ENCODE measurements at regions of chr11 and their contacts with region 1.

Region 1: DNA sequence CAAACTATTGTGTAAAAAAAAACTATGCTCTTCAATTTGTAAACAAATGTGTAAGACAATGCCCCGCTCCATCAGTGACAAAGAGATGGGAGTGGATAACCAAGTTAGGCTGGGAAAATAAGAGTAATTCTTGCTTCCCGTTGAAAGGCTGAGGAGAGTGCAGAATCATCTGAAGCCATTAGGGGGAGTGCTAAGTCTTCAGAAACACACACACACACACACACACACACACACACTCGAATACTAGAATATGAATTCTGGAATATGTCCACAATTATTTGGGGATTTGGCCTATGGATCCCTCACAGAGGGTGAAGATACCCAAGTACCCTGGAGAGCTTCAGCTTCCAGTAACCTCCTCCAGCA is 27.8 kb upstream of the ROBO3 start:
- DNase-seq: no peak
- ATAC-seq: peak; percentile 63

Region 2: DNA sequence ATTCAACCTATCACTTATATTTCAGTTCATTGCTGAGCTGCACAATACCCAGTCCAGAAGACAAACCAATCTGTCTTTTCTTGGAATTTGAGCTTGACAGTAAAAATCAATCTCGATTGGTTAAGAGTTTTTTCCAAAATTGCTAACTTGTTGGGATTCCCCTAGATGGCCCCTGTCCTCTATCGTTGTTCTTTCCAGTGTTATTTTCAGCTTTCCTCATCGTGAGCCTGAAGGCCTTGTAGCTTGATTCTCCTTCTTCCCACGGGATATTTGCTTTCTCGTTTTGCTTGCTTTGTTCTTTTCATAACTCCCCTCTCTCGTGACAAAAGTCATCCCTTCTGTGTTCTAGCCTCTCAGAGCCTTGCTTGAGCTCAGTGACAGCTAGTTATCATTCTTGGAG is 395.0 kb before region 1 on chr11:
- intact Hi-C with region 1: no loop called
- DNase-seq: no peak
- ATAC-seq: no peak

Region 3: DNA sequence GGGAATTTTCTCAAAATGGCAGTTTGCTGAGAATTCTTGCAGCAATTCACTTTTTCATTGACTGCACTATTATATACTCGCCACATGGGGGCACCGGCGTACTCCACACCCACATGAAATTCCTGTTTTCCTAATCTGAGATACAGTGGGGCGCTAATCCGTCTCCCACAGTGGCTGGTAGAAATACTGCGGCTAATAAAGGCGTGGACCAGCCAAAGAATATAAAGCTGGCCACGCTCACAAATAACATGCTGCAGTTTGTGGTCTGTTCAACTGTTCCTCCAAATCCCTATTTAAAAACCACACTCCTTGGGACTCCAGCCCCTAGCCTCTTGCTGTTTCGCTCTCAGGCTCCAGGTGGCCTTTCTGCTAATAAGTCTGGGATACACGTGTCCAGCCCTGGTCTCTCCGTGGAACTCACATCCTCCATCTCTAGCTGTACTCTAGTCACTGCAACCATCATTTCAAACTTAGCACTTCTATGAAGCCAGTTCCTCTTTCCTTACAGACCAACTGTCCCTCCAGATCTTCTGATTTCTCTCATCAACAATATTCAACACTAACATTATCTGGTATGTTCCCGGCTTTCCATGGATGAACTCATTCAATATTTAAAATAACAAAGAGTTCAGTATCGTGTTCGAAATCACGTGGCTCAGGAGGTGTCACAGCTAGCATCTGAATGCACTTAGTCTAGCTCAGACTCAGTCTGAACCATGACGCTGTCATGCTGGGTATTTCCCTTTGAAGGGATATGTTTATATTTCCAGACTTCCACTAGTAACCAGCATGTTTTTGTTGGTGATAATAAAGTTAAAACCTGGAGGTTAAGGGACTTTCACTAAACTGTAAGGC is 192.8 kb before region 1 on chr11:
- intact Hi-C with region 1: loop called (anchors 5 kb)
- DNase-seq: peak; percentile 46
- ATAC-seq: peak; percentile 90

Region 4: DNA sequence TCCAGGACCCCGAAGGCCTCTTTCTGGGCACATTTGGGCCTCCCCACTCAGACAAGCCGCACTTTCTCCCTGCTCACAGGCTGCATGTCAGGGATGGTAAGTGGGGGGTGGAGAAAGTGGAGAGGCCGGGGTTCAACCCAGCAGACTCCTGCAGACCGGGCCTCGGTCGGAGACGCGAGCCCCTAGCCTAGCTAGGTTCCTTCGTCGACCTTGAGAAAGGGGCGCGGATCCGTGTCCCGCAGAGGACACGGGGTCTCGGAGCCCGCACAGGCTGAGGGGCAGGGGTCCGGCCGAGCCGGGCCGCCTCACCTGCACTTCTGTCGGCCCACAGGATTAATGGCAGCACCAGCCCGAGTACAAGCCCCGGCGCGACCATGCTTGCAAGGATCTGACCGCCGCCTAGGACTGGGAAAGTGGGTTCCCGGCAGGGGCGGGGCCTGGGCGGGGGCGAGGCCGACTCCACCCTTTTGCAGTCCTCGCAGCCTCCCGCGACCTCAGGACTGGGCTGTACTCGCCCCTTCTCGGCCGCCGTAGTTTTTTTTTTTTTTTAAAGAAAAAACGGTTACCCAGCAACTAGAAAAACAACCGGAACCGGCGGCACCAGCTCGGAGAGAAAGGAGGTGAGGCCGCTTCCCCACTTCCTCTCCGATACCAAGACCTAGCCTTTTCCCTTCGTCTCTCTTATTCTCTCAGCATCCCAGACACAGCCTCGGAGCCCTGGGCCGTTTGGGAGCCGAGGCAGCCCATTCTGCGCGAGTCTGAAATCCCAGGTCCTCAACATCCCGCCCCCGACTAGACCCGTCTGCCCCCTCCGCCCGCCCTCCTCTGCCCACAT is 163.9 kb before region 1 on chr11 and contains the starts of genes SIAE and SPA17:
- intact Hi-C with region 1: loop called (anchors 2 kb)
- DNase-seq: peak; percentile 96
- ATAC-seq: peak; percentile 100
- total RNA-seq, gene SIAE: 83.4 TPM
- total RNA-seq, gene SPA17: 2.7 TPM

Region 5: GRCh38 chr11:124763156-124763947 is 74.1 kb before region 1 on chr11:
- intact Hi-C with region 1: loop called (anchors 10 kb)
- DNase-seq: peak; percentile 93
- ATAC-seq: peak; percentile 59

Measured in Right ventricle myocardium superior (tissue), 1 donor.